Calu3 (cell line): ENCODE measurements at regions of chr2 and their contacts with region 1.

Region 1: DNA sequence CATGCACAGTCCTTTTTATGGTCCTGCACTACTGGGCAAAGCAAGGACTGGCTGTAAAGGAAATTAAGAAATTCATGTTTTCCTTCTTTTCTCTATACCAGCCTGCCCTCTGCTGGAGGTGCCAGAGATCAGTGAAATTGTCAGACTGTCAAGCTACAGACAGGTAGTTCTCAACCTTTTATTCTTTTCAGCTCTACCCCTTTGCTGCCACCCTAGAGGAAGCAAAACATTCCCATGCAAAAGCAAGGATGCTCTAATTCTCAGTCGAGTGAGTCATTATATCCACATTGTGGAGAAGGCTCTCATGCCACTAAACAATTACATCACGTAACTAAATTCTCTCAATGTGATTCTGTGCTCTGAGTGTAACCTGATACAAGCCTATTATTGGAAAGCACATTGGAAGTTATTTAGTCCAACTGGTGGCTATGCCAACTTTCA is 25.0 kb upstream of the RAPGEF4 start:
- DNase-seq: peak; percentile 65
- H3K4me3 Mint-ChIP-seq: no peak overlapping the region
- H3K27ac Mint-ChIP-seq: no peak overlapping the region
- H3K4me1 Mint-ChIP-seq: no peaks in the 10 kb centered on the region
- H3K27me3 Mint-ChIP-seq: peaks cover 29% of the 10 kb centered on the region
- CTCF ChIP-seq: peak; percentile 48

Region 2: DNA sequence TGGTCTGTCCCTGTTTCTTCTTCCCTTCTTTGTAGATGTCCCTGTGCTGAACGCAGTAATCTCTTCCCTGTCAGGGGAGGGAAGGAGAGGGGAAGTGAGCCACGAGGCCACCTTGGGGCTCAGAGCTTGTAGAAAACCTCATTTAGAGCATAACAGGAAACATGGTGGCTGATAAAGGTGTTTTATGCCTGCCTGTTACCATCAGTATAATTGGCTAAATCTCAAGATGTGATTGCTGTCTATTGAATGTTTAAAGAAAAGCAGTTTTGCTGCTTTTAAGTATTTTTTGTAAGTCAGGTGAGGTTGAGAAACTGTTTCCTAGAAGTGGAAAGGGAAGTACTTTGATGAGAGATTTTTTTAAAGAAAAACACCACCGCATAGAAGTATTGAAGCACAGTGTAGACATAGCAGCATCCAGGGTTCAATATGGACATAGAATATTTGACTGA is 214.4 kb before region 1 on chr2:
- CTCF ChIA-PET with region 1: no interaction called
- intact Hi-C with region 1: loop called (anchors 10 kb)
- DNase-seq: no peak
- H3K4me3 Mint-ChIP-seq: no peak overlapping the region
- H3K27ac Mint-ChIP-seq: no peak overlapping the region
- H3K4me1 Mint-ChIP-seq: no peaks in the 10 kb centered on the region
- H3K27me3 Mint-ChIP-seq: no peaks in the 10 kb centered on the region
- CTCF ChIP-seq: no peak

Region 3: DNA sequence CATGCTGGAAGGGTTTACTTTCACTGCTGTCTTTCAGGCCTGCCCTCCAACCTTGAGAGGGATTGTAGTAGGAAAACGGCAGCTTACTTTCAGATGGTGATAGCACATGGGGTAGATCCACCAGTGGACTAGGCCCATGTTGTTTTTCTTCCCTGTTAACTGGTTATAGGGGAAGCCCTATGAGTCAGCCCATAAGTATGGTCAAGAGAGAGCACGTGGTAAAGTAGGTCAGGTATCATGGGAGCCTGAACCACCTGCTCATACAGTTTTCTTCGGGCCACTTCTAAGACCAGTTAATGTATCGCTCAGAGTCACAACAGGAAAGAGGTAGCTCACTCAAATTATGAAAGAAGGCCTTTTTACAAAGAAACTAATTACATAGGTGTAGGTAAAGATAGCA is 121.7 kb before region 1 on chr2:
- CTCF ChIA-PET with region 1: no interaction called
- intact Hi-C with region 1: loop called (anchors 1 kb)
- DNase-seq: peak; percentile 21
- H3K4me3 Mint-ChIP-seq: no peak overlapping the region
- H3K27ac Mint-ChIP-seq: peak overlapping the region; percentile 64
- H3K4me1 Mint-ChIP-seq: peaks cover 15% of the 10 kb centered on the region
- H3K27me3 Mint-ChIP-seq: no peaks in the 10 kb centered on the region
- CTCF ChIP-seq: no peak